Caki2 (cell line): ENCODE measurements at regions of chr17 and their contacts with region 1.

Region 1: DNA sequence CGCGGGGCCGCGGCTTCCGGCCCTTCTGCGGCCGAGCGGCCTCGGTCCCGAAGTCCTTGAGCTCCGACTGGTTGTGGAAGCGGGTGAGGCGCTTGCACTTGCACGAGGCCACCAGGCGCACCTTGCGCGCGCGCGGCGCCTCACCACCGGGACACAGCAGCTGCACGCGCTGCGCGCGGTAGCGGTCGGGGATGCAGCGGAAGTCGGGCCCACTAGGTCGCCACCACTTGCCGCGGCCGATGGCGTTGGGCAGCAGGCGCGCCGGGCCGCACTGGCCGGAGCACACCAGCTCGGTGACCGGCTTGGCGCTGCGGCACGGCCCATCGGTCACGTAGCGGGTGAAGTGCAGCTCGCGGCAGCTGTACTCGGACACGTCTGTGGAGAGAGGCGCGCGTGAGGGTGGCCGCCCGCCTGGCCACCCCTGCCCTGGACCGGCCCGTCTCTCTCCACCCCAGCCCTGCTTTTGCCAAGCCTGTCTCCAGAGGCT is 3.2 kb downstream of the SOST start:
- DNase-seq: no peak

Region 2: GRCh38 chr17:43691317-43691693 is 64.1 kb before region 1 on chr17:
- in situ Hi-C with region 1: no loop called
- DNase-seq: no peak

Region 3: DNA sequence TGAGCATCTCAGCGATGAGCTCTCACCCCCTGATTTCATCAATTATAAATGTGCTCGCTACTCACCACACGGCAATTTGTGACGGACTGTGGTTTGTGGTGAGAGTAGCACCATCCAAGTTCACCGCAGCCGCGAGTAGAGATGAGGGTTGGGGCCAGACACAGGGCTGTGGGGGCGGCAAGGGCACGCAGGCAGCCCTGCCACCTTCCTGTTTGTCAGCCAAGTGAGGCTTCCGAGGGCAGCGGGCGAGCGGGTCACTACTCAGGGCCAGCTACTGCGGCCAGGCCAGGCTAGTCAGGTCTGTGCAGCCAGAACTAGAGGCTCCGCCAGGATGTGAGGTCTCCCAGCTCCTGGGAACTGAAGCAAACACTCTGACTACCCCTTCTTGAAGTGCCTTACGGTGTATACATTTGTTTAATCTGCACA is 54.1 kb before region 1 on chr17:
- in situ Hi-C with region 1: loop called (anchors 10 kb)
- DNase-seq: no peak